Psoas muscle (tissue), 8 donors: ENCODE measurements at regions of chr5 and their contacts with region 1.

Region 1: DNA sequence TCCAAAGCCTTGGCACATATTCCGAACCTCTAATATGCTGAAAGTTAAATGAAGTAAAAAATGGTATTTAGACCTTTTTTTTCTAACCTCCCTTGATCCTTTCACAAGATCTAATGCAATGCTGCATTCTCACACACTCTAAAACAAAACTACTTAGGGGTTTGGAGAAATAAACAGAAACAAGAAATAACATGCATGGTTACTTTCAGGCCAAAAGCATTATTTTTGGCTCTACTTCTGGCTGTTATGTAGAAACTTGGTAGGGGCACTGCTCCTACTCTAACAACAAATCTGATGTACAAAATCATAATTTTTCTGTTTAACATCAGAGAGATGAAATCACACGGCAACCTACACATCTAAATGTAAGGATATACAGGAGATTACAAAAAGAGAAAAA is 51.2 kb downstream of the CHD1 start:
- DNase-seq: no peak
- ATAC-seq: no peak
- H3K4me3 ChIP-seq: no peak overlapping the region
- H3K27ac ChIP-seq: no peak overlapping the region
- H3K4me1 ChIP-seq: no peaks in the 10 kb centered on the region
- H3K27me3 ChIP-seq: no peaks in the 10 kb centered on the region
- CTCF ChIP-seq: no peak

Region 2: DNA sequence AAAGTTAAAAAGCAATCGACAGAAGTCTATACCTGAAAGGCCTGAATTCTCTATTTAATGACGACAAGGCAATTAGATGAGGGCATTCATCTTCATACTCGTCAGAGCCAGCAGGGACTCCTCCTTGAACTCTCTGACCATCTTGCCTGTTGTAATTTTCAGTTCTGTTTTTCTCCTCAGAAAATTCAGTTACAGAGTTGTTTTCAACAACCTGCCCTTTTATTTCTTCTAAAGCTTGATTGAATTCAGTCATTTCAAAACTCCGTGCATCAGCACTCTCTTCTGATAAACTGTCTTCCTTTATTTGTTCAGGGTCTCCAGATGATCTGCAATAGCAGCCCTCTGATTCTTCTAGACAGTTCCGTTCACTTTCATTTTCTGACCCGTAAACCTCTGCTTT is 1710.2 kb before region 1 on chr5:
- intact Hi-C with region 1: loop called in 1 of 2 experiments (anchors 5 kb)
- DNase-seq: no peak
- ATAC-seq: no peak
- H3K4me3 ChIP-seq: no peak overlapping the region
- H3K27ac ChIP-seq: no peak overlapping the region
- H3K4me1 ChIP-seq: no peaks in the 10 kb centered on the region
- H3K27me3 ChIP-seq: no peaks in the 10 kb centered on the region
- CTCF ChIP-seq: no peak

Region 3: DNA sequence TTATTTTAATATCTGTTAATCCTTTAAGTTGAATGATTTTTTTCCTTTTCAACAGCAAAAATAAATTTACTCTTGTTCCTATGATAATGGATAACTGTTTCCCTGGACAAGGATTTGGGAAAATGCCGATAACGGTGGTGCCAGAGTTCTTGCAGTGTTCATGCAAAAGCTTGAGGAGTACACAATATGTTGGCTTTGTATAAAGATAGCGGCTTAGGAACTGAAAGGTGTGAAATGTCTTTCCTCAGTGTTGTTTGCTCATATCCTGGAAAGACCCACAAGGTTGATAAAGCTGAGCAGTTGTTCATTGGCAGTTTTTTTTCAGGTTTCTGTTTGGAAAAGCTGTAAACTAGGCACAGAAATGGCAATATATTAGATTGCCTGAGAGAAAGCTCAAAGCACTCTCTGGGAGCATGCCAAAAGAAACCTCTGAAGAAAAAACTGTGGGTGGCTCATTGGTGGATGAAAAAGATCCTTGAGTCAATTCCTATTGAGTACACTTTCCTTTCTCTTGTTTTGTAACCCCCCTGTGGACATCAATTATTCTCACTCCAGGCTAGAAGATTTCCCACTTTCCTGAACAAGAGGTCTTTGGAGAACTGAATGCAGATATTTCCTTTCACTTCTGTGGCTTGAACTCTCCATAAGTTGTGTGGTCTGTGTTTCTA is 221.3 kb before region 1 on chr5:
- intact Hi-C with region 1: no loop called
- DNase-seq: no peak
- ATAC-seq: no peak
- H3K4me3 ChIP-seq: no peak overlapping the region
- H3K27ac ChIP-seq: no peak overlapping the region
- H3K4me1 ChIP-seq: no peaks in the 10 kb centered on the region
- H3K27me3 ChIP-seq: peaks cover 0 to 1% (median 0%) of the 10 kb centered on the region in 3 donors
- CTCF ChIP-seq: no peak